PC-3 (cell line): ENCODE measurements at regions of chr18 and their contacts with region 1.

Region 1: DNA sequence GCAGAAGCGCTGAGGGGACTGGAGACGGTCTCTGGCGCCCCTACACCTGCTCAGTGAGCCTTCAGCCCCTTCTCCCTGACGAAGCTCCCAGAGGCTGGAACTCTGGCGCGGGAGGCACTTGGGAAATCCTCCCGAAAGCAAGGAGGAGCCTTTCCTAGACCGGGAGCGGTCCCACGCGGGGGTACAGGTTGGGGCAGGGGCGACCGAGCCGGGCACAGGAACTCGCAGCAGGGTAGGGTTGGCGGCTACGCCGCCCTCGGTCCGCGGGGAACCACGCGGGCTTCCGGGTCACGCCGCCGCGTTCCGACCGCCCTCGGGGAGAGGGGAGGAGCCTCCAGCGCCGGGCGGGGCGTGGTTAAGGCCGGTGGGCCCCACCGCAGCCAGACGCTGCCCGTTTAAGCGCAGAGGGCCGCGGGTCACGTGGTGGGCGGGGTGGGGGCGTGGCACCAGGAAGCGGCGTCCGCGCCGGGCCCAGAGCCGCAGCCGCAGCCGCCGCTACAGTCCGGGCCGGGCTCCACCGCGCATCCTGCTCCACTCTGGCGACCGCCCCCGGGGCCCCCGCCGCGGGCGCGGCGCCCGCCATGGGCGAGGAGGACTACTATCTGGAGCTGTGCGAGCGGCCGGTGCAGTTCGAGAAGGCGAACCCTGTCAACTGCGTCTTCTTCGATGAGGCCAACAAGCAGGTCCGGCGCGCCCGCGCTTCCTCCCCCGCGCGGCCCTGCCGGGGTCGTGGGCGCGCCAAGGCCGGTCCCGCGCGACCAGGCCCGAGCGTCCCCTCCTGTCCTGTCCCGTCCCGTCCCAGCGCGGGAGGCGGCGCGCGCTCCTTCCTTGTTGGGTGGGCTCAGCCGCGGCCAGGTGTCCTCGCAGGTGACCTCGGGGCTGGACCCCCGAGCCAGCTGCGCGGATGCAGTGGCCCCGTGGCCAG is at the start of gene RMC1:
- DNase-seq: peak; percentile 93
- ATAC-seq: peak; percentile 78
- H3K4me3 ChIP-seq: peak within 1 kb of the TSS; percentile 85
- H3K27ac ChIP-seq: peak within 1 kb of the TSS; percentile 44
- H3K4me1 ChIP-seq: peaks cover 20% of the 10 kb centered on the region; the same call in 1 of the 2 replicates
- H3K27me3 ChIP-seq: no peaks in the 10 kb centered on the region
- CTCF ChIP-seq: no peak
- total RNA-seq, gene RMC1: 23.2 and 27.6 TPM in 2 replicates

Region 2: GRCh38 chr18:23032030-23032582 is 471.2 kb before region 1 on chr18:
- CTCF ChIA-PET with region 1: no interaction called
- POLR2A ChIA-PET with region 1: no interaction called
- intact Hi-C with region 1: loop called (anchors 10 kb)
- DNase-seq: peak; percentile 52
- ATAC-seq: no peak; the same call in 1 of the 2 replicates
- H3K4me3 ChIP-seq: no peak overlapping the region
- H3K27ac ChIP-seq: peak overlapping the region; percentile 23
- H3K4me1 ChIP-seq: peaks cover 17% of the 10 kb centered on the region
- H3K27me3 ChIP-seq: no peaks in the 10 kb centered on the region
- CTCF ChIP-seq: no peak

Region 3: GRCh38 chr18:23416298-23416697 is 87.0 kb before region 1 on chr18:
- CTCF ChIA-PET with region 1: no interaction called
- POLR2A ChIA-PET with region 1: no interaction called
- intact Hi-C with region 1: no loop called
- DNase-seq: no peak
- ATAC-seq: no peak
- H3K4me3 ChIP-seq: no peak overlapping the region
- H3K27ac ChIP-seq: no peak overlapping the region
- H3K4me1 ChIP-seq: no peaks in the 10 kb centered on the region
- H3K27me3 ChIP-seq: no peaks in the 10 kb centered on the region
- CTCF ChIP-seq: no peak

Region 4: DNA sequence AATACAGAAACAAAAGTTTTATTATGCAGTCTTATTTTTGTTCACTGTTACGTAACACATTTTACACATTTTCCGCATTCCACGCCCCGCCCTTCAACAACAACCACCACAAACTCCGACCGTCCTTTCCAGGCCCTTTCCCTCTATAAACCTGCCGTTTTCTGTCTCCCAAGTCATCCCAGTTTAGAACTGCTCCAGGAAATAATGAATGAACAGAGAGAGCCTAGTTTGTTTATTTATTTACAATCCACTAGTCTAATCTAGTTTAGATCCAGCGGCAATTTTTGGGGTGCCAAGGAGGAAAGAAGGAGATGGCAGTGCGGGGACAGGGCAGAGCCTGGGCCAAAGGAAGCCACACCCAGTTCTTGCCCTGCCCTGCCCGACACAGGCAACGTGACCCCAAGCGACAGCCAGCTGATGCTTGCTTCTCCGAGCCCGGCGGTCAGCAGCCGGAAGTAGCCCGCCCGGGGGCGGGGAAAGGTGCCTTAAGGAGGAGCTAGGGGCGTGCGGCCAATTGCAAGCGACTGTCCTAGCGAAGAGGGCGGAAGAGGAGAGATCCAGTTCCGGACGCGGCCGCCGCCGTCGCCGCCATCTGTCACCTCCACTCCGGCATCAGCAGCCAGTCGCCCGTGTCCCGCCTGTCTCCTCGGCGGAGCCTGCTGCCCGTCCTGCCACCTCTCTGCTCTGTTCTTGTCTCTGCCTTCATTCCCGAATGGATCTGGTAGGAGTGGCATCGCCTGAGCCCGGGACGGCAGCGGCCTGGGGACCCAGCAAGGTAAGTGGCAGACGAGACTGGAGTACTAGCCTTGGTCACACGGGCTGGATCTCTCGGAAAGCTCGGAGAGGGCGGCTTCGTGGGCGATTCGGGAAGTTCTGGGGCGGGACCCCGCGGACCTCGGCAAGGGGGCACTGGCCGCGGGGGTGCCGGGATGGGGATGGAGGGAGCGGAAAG is 50.3 kb before region 1 on chr18 and contains the start of gene RIOK3:
- CTCF ChIA-PET with region 1: no interaction called
- POLR2A ChIA-PET with region 1: no interaction called
- intact Hi-C with region 1: no loop called
- DNase-seq: peak; percentile 97
- ATAC-seq: peak; percentile 93
- H3K4me3 ChIP-seq: peak within 1 kb of the TSS; percentile 99
- H3K27ac ChIP-seq: peak within 1 kb of the TSS; percentile 90
- H3K4me1 ChIP-seq: peaks cover 19% of the 10 kb centered on the region
- H3K27me3 ChIP-seq: no peaks in the 10 kb centered on the region
- CTCF ChIP-seq: no peak
- total RNA-seq, gene RIOK3: 35.0 and 41.4 TPM in 2 replicates

Region 5: DNA sequence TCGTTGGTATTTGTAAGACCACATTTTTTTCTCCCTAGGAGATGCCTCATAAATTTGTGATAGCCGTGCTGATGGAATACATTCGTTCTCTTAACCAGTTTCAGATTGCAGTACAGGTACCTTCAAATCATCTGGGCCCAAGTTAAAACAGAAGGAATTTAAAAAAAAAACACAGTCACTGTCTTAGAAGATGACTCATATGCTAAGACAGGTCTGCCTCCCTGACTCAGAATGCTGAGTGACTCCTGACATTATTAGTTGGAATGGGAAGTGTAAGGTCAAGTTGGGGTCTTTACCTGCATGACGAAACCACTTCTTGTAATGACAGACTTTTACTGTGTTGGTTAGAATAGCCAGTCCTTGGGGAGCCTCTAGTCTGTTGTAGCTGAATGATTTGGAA is 26.3 kb after region 1 on chr18:
- CTCF ChIA-PET with region 1: interaction called, 11 read pairs
- POLR2A ChIA-PET with region 1: no interaction called
- intact Hi-C with region 1: no loop called
- DNase-seq: peak; percentile 91
- ATAC-seq: peak; percentile 72
- H3K4me3 ChIP-seq: no peak overlapping the region
- H3K27ac ChIP-seq: peak overlapping the region; percentile 78
- H3K4me1 ChIP-seq: peaks cover 31% of the 10 kb centered on the region
- H3K27me3 ChIP-seq: no peaks in the 10 kb centered on the region
- CTCF ChIP-seq: no peak

Region 6: GRCh38 chr18:23596183-23596582 is 92.9 kb after region 1 on chr18:
- CTCF ChIA-PET with region 1: no interaction called
- POLR2A ChIA-PET with region 1: no interaction called
- intact Hi-C with region 1: no loop called
- DNase-seq: no peak
- ATAC-seq: no peak
- H3K4me3 ChIP-seq: no peak overlapping the region
- H3K27ac ChIP-seq: no peak overlapping the region
- H3K4me1 ChIP-seq: peaks cover 22% of the 10 kb centered on the region
- H3K27me3 ChIP-seq: no peaks in the 10 kb centered on the region
- CTCF ChIP-seq: no peak

Region 7: GRCh38 chr18:23719634-23720201 is 216.4 kb after region 1 on chr18:
- CTCF ChIA-PET with region 1: no interaction called
- POLR2A ChIA-PET with region 1: no interaction called
- intact Hi-C with region 1: loop called (anchors 10 kb)
- DNase-seq: peak; percentile 98
- ATAC-seq: peak; percentile 93
- H3K4me3 ChIP-seq: no peak overlapping the region
- H3K27ac ChIP-seq: peak overlapping the region; percentile 97
- H3K4me1 ChIP-seq: peaks cover 44% of the 10 kb centered on the region
- H3K27me3 ChIP-seq: no peaks in the 10 kb centered on the region
- CTCF ChIP-seq: no peak